Activated T-helper 2 cell treated with anti-CD3 and anti-CD28 coated beads, Interferon-gamma antibody, Interleukin-2, Interleukin-4, amounts not matched to agents 10 μg/mL and 5 μg/mL and 100 μg/mL, durations not matched to agents 14 hours and 24 hours and 36 hours (primary cell): ENCODE measurements at regions of chr1 and their contacts with region 1.

Region 1: DNA sequence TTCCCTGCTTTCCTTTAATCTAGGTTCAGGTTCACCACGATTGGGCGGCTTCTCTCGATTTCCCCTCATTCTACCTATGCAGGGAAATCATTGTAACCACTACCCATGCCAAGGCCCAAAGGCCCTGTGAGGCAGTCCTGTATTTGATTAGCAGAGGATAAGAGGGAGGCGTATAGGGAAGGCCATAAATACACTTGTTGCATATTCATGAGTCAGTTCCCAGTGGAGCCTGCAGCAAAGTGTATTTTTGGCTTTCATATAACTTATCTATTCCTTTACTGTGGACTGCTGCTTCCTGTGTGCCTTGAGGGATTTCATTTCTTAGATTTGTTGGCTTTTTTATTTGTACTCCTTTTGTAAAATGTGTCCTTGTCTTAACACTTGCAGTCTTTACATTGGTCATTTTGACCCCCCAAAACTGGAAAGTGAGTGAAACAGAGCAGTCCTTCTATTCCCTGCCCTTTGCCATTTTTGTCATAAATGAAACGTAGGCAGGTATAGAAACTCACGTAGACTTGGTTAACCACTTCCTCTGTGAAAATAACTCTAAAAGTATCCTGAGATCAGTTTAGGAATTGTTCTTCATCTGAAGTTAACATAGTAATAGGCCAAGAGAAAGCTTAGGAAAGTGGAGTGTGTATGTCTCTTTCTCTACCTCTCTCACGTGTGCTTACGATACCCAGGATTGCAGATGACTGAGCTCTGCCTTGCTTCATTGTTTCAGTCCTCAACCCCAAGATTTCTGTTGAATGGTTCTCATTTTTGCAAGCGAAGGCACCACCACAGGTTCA is 19.6 kb upstream of the KCNQ4 start:
- DNase-seq: no peak
- H3K4me3 Mint-ChIP-seq: peak overlapping the region; percentile 56
- H3K27ac Mint-ChIP-seq: peak overlapping the region; percentile 95
- H3K4me1 Mint-ChIP-seq: peaks cover 39% of the 10 kb centered on the region
- H3K27me3 Mint-ChIP-seq: no peaks in the 10 kb centered on the region

Region 2: GRCh38 chr1:40709100-40709801 is 54.7 kb before region 1 on chr1:
- intact Hi-C with region 1: loop called (anchors 5 kb)
- DNase-seq: peak; percentile 75
- H3K4me3 Mint-ChIP-seq: peak overlapping the region; percentile 89
- H3K27ac Mint-ChIP-seq: peak overlapping the region; percentile 93
- H3K4me1 Mint-ChIP-seq: peaks cover 54% of the 10 kb centered on the region
- H3K27me3 Mint-ChIP-seq: no peaks in the 10 kb centered on the region

Region 3: GRCh38 chr1:40753142-40753882 is 10.6 kb before region 1 on chr1:
- intact Hi-C with region 1: loop called (anchors 1 kb)
- DNase-seq: no peak
- H3K4me3 Mint-ChIP-seq: peak overlapping the region; percentile 61
- H3K27ac Mint-ChIP-seq: peak overlapping the region; percentile 91
- H3K4me1 Mint-ChIP-seq: peaks cover 28% of the 10 kb centered on the region
- H3K27me3 Mint-ChIP-seq: no peaks in the 10 kb centered on the region